ENCODE measurements at regions of chr1 and their contacts with region 1.

Region 1: DNA sequence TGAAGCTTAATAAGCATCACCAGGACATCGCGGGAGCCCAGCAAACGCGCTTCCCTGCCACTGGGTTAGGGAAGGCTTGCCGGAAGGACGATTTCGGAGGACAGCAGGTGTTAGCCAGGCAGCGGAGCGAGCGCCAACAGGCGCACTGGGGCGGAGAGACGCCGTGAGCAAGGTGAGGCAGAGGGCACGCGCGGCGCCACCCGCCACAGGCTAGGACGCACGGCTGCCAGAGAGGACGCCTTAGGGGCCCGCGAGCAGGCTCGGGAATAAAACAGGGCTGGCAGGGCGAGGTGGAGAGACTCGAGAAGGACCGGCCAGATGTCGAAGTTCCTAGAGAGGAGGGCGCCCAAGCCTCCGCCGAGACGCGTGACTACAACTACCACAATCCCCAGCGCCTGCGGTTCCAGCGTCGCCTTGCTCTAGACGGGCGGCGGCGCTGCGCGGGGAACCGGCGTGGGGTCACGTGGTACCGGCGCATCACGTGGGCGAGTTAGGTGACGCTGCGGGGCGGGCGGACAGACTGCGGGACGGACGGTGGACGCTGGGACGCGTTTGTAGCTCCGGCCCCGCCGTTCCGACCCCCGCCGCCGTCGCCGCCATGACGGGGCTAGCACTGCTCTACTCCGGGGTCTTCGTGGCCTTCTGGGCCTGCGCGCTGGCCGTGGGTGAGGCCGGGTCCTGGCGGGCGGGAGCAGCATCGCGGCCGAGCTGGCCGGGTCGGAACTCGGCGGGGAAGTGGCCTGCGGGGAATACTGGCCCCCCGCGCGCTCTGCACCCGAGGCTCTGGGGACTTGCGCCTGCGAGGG is at the start of gene ATP6V0B:
- DNase-seq: peak; percentile 98
- ATAC-seq: peak; percentile 72
- H3K4me3 Mint-ChIP-seq: peak within 1 kb of the TSS; percentile 90
- H3K27ac Mint-ChIP-seq: peak within 1 kb of the TSS; percentile 90
- H3K4me1 Mint-ChIP-seq: peaks cover 48% of the 10 kb centered on the region
- H3K27me3 Mint-ChIP-seq: no peaks in the 10 kb centered on the region
- CTCF ChIP-seq: no peak
- total RNA-seq, gene ATP6V0B: 67.6 to 75.5 TPM

Region 2: GRCh38 chr1:43991476-43992231 is 17.0 kb after region 1 on chr1 and contains the start of gene CCDC24:
- CTCF ChIA-PET with region 1: interaction called, 5 read pairs
- POLR2A ChIA-PET with region 1: interaction called, 13 read pairs
- intact Hi-C with region 1: no loop called
- DNase-seq: peak; percentile 81
- ATAC-seq: peak; percentile 87
- H3K4me3 Mint-ChIP-seq: peak within 1 kb of the TSS; percentile 80
- H3K27ac Mint-ChIP-seq: peak within 1 kb of the TSS; percentile 59
- H3K4me1 Mint-ChIP-seq: peaks cover 12% of the 10 kb centered on the region
- H3K27me3 Mint-ChIP-seq: no peaks in the 10 kb centered on the region
- CTCF ChIP-seq: no peak
- total RNA-seq, gene CCDC24: 1.4 to 1.8 TPM

Region 3: GRCh38 chr1:44029906-44030604 is 55.4 kb after region 1 on chr1:
- CTCF ChIA-PET with region 1: no interaction called
- POLR2A ChIA-PET with region 1: interaction called, 11 read pairs
- intact Hi-C with region 1: no loop called
- DNase-seq: peak; percentile 95
- ATAC-seq: peak; percentile 84
- H3K4me3 Mint-ChIP-seq: peak overlapping the region; percentile 90
- H3K27ac Mint-ChIP-seq: peak overlapping the region; percentile 96
- H3K4me1 Mint-ChIP-seq: peaks cover 25% of the 10 kb centered on the region
- H3K27me3 Mint-ChIP-seq: no peaks in the 10 kb centered on the region
- CTCF ChIP-seq: no peak

Region 4: DNA sequence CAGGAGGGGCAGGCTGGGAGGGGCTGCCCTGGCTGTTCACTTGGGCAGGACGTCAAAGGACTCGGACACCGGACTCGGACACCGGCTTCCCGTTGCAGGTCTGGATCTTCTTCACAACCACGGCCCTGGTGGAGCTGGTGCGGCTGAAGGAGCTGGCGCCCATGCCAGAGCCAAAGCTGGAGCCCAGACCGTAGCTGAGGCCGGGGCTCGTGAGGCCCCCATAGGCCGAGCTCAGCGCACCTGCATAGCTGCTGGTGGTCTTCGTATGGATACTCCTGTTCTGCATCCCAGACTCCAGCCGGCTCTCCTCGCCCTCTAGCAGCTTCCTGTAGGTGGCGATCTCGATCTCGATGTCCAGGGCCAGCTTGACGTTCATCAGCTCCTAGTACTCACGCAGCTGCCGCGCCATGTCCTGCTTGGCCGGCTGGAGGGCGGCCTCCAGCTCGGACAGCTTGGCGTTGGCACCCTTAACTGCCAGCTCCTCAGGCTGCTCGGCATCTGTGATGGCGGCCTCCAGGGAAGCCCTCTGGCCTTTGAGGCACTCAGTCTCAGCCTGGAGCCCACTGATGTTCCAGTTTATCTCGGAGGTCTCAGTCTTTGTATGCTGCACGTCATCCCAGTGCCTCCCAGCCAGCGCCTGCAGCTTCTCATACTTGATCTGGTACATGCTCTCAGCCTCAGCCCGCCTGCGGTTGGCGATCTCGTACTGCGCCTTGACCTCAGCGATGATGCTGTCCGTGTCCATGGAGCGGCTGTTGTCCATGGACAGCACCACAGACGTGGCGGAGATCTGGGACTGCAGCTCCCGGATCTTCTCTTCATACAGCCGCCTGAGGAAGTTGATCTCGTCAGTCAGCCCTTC is 128.9 kb after region 1 on chr1:
- CTCF ChIA-PET with region 1: no interaction called
- POLR2A ChIA-PET with region 1: no interaction called
- intact Hi-C with region 1: no loop called
- DNase-seq: peak; percentile 26
- ATAC-seq: no peak
- H3K4me3 Mint-ChIP-seq: no peak overlapping the region
- H3K27ac Mint-ChIP-seq: no peak overlapping the region
- H3K4me1 Mint-ChIP-seq: no peaks in the 10 kb centered on the region
- H3K27me3 Mint-ChIP-seq: peaks cover 14% of the 10 kb centered on the region
- CTCF ChIP-seq: no peak